Panc1 (cell line): ENCODE measurements at regions of chr10 and their contacts with region 1.

Region 1: DNA sequence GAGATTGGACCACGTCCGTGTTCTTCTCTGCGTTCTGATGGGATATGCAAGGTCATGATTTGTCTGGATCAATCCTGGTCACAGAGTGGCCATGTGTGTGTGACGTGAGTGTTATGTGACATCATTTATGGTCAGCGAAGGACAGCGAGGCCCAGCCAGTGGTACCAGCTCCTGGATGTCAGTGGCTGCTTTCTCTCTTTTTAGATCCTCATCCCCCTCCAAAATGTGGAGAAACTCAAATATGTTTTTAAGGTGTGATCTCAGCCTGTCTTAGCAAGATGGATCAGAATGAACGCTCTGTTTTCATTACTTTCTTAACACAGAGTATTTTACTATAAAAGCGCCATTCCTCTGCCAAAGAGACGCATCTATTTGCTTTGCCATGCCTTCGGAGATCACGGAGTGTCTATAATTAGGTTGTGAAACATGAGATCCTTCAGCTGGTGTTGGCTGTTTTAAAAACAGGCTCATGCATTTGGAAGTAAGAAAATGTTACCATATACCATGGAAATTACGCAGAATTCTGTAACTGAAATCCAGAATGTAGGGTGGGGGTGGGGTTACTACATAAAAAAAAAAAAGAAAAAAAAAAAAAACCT is 245.5 kb upstream of the TCERG1L start:
- DNase-seq: no peak
- ATAC-seq: no peak
- H3K4me3 ChIP-seq: no peak overlapping the region
- H3K27ac ChIP-seq: no peak overlapping the region
- H3K4me1 ChIP-seq: no peaks in the 10 kb centered on the region; the same call in 1 of the 2 replicates
- H3K27me3 ChIP-seq: peaks cover 38% of the 10 kb centered on the region
- CTCF ChIP-seq: no peak

Region 2: DNA sequence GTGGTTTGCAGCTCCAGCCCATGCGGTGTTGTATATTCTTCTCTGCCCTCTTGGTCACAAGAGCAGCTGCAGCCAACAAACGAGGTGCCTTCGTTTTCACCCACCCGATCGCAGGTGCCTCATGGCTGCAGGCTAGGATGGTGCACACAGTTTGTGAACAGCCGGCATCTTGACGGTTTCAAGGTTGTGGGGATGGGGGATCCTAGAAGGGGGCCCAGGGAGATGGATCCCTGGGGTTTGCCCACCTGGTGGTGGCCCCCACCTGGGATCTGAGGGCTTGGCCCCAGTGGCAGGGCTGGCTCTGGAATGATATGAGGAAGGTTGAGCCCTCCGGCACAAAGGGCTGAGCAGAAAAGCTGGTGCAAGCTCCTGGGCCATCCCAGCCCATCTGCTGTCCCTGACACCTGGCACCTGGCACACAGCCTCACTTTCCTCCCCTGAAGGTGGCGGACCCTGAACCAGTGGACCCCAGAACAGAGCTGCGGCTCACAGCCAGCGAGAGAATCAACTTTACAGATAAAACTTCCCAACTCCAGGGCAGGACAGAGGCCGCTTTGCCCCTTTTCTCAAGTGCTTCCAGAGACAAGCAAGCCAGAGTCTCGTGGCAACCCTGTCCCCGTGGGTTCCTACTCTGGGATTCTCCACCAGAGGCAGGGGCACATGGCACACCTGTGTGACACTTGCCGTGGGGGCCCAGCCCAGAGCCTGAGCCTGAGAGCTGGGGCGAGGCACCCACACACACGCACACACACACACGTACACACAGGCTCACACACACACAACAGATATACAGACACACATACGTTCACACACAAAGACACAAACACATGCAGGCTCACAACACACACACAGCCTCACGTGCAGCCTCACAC is 166.5 kb after region 1 on chr10:
- CTCF ChIA-PET with region 1: no interaction called
- POLR2A ChIA-PET with region 1: no interaction called
- in situ Hi-C with region 1: no loop called
- intact Hi-C with region 1: no loop called
- DNase-seq: no peak
- ATAC-seq: no peak
- H3K4me3 ChIP-seq: no peak overlapping the region
- H3K27ac ChIP-seq: no peak overlapping the region
- H3K4me1 ChIP-seq: no peaks in the 10 kb centered on the region
- H3K27me3 ChIP-seq: no peaks in the 10 kb centered on the region
- CTCF ChIP-seq: no peak

Region 3: DNA sequence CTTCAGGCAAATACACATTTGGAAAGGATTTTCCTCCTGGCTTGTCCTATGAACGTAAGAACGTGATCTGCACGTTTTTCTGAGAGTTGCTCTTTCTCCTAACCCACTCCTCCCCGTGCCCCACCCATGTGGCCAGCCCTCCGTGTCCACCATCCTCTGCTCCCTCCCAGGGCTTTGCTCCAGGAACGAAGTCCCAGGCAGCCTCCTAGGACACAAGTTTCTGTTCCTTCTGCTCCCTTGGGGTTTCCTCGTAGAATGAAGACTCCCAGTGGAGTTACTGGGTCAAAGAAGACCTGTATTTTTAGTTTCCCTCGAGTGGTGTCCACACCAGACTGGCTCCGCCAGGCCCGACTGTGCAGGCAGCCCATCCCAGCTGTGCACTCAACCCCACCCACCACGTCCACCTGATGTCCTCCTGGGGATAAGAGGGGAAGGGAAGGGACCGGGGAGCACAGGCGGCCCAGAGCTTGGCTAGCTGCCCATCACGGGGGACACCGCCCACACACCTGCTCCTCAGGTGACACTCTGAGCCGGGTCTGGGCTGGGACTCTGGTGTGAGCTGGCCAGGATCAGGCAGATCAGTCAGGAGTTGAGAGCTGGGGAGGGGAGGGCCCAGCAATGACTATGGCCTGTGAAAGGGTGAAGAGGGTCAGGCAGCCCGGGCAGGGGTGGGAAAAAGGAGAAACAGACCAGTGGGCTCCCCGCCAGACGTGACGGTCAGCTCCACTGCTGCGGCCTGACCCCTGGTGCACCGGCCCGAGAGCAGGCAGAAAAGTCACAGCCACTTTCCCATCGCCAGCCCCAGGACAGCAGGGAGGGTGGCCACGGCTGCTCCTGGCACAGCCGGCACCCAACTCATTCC is 289.5 kb after region 1 on chr10:
- CTCF ChIA-PET with region 1: no interaction called
- POLR2A ChIA-PET with region 1: no interaction called
- in situ Hi-C with region 1: no loop called
- intact Hi-C with region 1: loop called (anchors 10 kb)
- DNase-seq: no peak
- ATAC-seq: no peak
- H3K4me3 ChIP-seq: no peak overlapping the region
- H3K27ac ChIP-seq: no peak overlapping the region
- H3K4me1 ChIP-seq: no peaks in the 10 kb centered on the region
- H3K27me3 ChIP-seq: no peaks in the 10 kb centered on the region
- CTCF ChIP-seq: no peak